ENCODE measurements at regions of chr14 and their contacts with region 1.

Region 1: GRCh38 chr14:58717813-58718212 is 80.1 kb downstream of the DACT1 start:
- DNase-seq: no peak
- ATAC-seq: no peak
- H3K4me3 ChIP-seq: no peak overlapping the region
- H3K27ac ChIP-seq: no peak overlapping the region
- H3K4me1 ChIP-seq: peaks cover 9% of the 10 kb centered on the region; the same call in 1 of the 2 replicates
- H3K27me3 ChIP-seq: peaks cover 11% of the 10 kb centered on the region; the same call in 1 of the 2 replicates
- CTCF ChIP-seq: no peak

Region 2: GRCh38 chr14:58668848-58669480 is 48.8 kb before region 1 on chr14:
- CTCF ChIA-PET with region 1: no interaction called
- POLR2A ChIA-PET with region 1: no interaction called
- intact Hi-C with region 1: no loop called
- DNase-seq: no peak
- ATAC-seq: no peak
- H3K4me3 ChIP-seq: no peak overlapping the region
- H3K27ac ChIP-seq: no peak overlapping the region
- H3K4me1 ChIP-seq: no peaks in the 10 kb centered on the region
- H3K27me3 ChIP-seq: peaks cover 95% of the 10 kb centered on the region
- CTCF ChIP-seq: 0 out of 2 replicates have a peak, but pooled peaks have one; percentile 13

Region 3: DNA sequence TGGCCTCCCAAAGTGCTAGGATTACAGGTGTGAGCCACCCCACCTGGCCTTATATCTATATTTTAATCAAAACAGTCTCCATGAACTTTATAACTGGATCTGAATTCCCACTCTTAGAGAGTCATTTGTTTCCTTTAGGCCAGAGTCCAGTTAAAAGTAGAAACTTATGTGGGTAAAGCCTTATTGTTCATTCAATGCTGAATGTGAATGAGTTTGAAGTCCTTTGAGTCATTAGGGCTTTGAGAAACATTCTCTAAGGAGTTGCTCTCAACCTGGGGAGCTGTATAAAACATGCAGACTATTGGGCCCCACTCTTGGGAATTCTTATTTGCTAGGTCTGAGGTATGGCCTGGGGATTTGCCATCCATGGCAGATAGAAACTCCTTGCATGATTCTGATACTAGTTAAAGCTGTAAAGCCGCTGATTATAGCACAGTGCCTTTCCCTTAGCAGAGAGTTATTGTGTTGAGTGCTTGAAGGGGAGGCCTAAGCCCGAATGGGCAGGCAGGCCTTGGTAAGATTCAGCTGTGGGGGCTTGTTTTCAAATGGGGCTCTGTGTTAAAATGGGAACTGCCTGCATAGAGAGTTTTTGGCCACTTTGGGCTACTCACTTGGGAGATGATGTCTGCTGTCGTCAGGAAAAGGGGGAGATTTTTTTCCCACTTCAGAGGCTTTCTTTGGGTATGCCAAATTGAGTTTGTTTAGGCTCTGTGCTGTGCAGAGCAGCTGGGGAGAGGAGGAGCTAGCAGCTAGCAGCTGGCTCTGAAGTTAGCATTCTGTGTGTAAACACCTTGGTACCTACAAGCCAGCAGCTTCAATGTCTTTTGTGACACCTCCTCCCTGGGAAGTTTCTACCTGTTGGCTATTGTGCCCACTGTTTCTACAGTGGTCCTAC is 37.5 kb after region 1 on chr14:
- CTCF ChIA-PET with region 1: no interaction called
- POLR2A ChIA-PET with region 1: no interaction called
- intact Hi-C with region 1: loop called (anchors 5 kb)
- DNase-seq: no peak
- ATAC-seq: no peak
- H3K4me3 ChIP-seq: no peak overlapping the region
- H3K27ac ChIP-seq: no peak overlapping the region
- H3K4me1 ChIP-seq: peaks cover 9% of the 10 kb centered on the region
- H3K27me3 ChIP-seq: no peaks in the 10 kb centered on the region
- CTCF ChIP-seq: no peak